T-cell (primary cell): ENCODE measurements at regions of chr7 and their contacts with region 1.

Region 1: GRCh38 chr7:6242561-6242960 is 29.9 kb downstream of the CYTH3 start:
- DNase-seq: no peak
- ATAC-seq: no peak
- H3K4me3 ChIP-seq: no peak overlapping the region
- H3K4me3 Mint-ChIP-seq: no peak overlapping the region
- H3K27ac ChIP-seq: peak overlapping the region; percentile 62
- H3K27ac Mint-ChIP-seq: no peak overlapping the region
- H3K4me1 ChIP-seq: peaks cover 0 to 14% of the 10 kb centered on the region in 2 experiments
- H3K4me1 Mint-ChIP-seq: peaks cover 5 to 22% (median 11%) of the 10 kb centered on the region in 3 donors
- H3K27me3 ChIP-seq: no peaks in the 10 kb centered on the region
- H3K27me3 Mint-ChIP-seq: no peaks in the 10 kb centered on the region

Region 2: GRCh38 chr7:6260291-6261187 is 18.0 kb after region 1 on chr7:
- CTCF ChIA-PET with region 1: interaction called, 5 to 12 read pairs
- POLR2A ChIA-PET with region 1: no interaction called
- DNase-seq: no peak
- ATAC-seq: no peak
- H3K4me3 ChIP-seq: no peak overlapping the region
- H3K4me3 Mint-ChIP-seq: no peak overlapping the region
- H3K27ac ChIP-seq: no peak overlapping the region
- H3K27ac Mint-ChIP-seq: peak overlapping the region; percentile 24 to 68
- H3K4me1 ChIP-seq: peaks cover 8 to 14% of the 10 kb centered on the region in 2 experiments
- H3K4me1 Mint-ChIP-seq: peaks cover 38 to 58% (median 56%) of the 10 kb centered on the region in 3 donors
- H3K27me3 ChIP-seq: no peaks in the 10 kb centered on the region
- H3K27me3 Mint-ChIP-seq: no peaks in the 10 kb centered on the region